CD8-positive, alpha-beta T cell (primary cell): ENCODE measurements at regions of chr22 and their contacts with region 1.

Region 1: GRCh38 chr22:40243891-40244290 is 66.2 kb downstream of the TNRC6B start:
- DNase-seq: peak in 3 of 9 experiments; percentile 22 to 68 (median 47)
- ATAC-seq: no peak
- H3K4me3 ChIP-seq: no peak overlapping the region
- H3K4me3 Mint-ChIP-seq: peak overlapping the region; percentile 38
- H3K27ac ChIP-seq: peak overlapping the region in 1 of 2 experiments; percentile 11
- H3K27ac Mint-ChIP-seq: peak overlapping the region; percentile 71
- H3K4me1 ChIP-seq: peaks cover 78% of the 10 kb centered on the region
- H3K4me1 Mint-ChIP-seq: peaks cover 80% of the 10 kb centered on the region
- H3K27me3 ChIP-seq: no peaks in the 10 kb centered on the region
- H3K27me3 Mint-ChIP-seq: no peaks in the 10 kb centered on the region
- CTCF ChIP-seq: no peak

Region 2: GRCh38 chr22:40203572-40203971 is 40.3 kb before region 1 on chr22:
- CTCF ChIA-PET with region 1: no interaction called
- POLR2A ChIA-PET with region 1: interaction called, 4 read pairs
- intact Hi-C with region 1: loop called in 1 of 2 experiments (anchors 5 kb)
- DNase-seq: peak in 6 of 9 experiments; percentile 27 to 73 (median 51)
- ATAC-seq: peak; percentile 93
- H3K4me3 ChIP-seq: no peak overlapping the region
- H3K4me3 Mint-ChIP-seq: peak overlapping the region; percentile 66
- H3K27ac ChIP-seq: peak overlapping the region in 1 of 2 experiments; percentile 22
- H3K27ac Mint-ChIP-seq: peak overlapping the region; percentile 96
- H3K4me1 ChIP-seq: peaks cover 49% of the 10 kb centered on the region
- H3K4me1 Mint-ChIP-seq: peaks cover 70% of the 10 kb centered on the region
- H3K27me3 ChIP-seq: no peaks in the 10 kb centered on the region
- H3K27me3 Mint-ChIP-seq: no peaks in the 10 kb centered on the region
- CTCF ChIP-seq: no peak

Region 3: GRCh38 chr22:40276996-40277823 is 33.3 kb after region 1 on chr22:
- CTCF ChIA-PET with region 1: no interaction called
- POLR2A ChIA-PET with region 1: interaction called, 3 read pairs
- intact Hi-C with region 1: loop called in 1 of 2 experiments (anchors 5 kb)
- DNase-seq: no peak
- ATAC-seq: no peak
- H3K4me3 ChIP-seq: peak overlapping the region in 1 of 2 experiments; percentile 72
- H3K4me3 Mint-ChIP-seq: peak overlapping the region; percentile 29
- H3K27ac ChIP-seq: peak overlapping the region; percentile 72 to 76
- H3K27ac Mint-ChIP-seq: peak overlapping the region; percentile 49
- H3K4me1 ChIP-seq: peaks cover 27% of the 10 kb centered on the region
- H3K4me1 Mint-ChIP-seq: peaks cover 49% of the 10 kb centered on the region
- H3K27me3 ChIP-seq: no peaks in the 10 kb centered on the region
- H3K27me3 Mint-ChIP-seq: no peaks in the 10 kb centered on the region
- CTCF ChIP-seq: no peak

Region 4: GRCh38 chr22:40289991-40290459 is 46.1 kb after region 1 on chr22:
- CTCF ChIA-PET with region 1: no interaction called
- POLR2A ChIA-PET with region 1: interaction called, 5 read pairs
- intact Hi-C with region 1: loop called in 1 of 2 experiments (anchors 5 kb)
- DNase-seq: peak; percentile 52 to 91 (median 76)
- ATAC-seq: peak; percentile 86
- H3K4me3 ChIP-seq: peak overlapping the region in 1 of 2 experiments; percentile 6
- H3K4me3 Mint-ChIP-seq: peak overlapping the region; percentile 59
- H3K27ac ChIP-seq: peak overlapping the region; percentile 58 to 85
- H3K27ac Mint-ChIP-seq: peak overlapping the region; percentile 98
- H3K4me1 ChIP-seq: peaks cover 31% of the 10 kb centered on the region
- H3K4me1 Mint-ChIP-seq: peaks cover 59% of the 10 kb centered on the region
- H3K27me3 ChIP-seq: no peaks in the 10 kb centered on the region
- H3K27me3 Mint-ChIP-seq: no peaks in the 10 kb centered on the region
- CTCF ChIP-seq: no peak

Region 5: GRCh38 chr22:40332319-40332781 is 88.5 kb after region 1 on chr22:
- CTCF ChIA-PET with region 1: no interaction called
- POLR2A ChIA-PET with region 1: no interaction called
- intact Hi-C with region 1: loop called in 1 of 2 experiments (anchors 1 kb)
- DNase-seq: peak in 3 of 9 experiments; percentile 34 to 62 (median 57)
- ATAC-seq: peak; percentile 72
- H3K4me3 ChIP-seq: no peak overlapping the region
- H3K4me3 Mint-ChIP-seq: peak overlapping the region; percentile 52
- H3K27ac ChIP-seq: peak overlapping the region; percentile 6 to 30
- H3K27ac Mint-ChIP-seq: peak overlapping the region; percentile 92
- H3K4me1 ChIP-seq: peaks cover 90% of the 10 kb centered on the region
- H3K4me1 Mint-ChIP-seq: peaks cover 95% of the 10 kb centered on the region
- H3K27me3 ChIP-seq: no peaks in the 10 kb centered on the region
- H3K27me3 Mint-ChIP-seq: no peaks in the 10 kb centered on the region
- CTCF ChIP-seq: no peak